ENCODE measurements at regions of chr5 and their contacts with region 1.

Region 1: DNA sequence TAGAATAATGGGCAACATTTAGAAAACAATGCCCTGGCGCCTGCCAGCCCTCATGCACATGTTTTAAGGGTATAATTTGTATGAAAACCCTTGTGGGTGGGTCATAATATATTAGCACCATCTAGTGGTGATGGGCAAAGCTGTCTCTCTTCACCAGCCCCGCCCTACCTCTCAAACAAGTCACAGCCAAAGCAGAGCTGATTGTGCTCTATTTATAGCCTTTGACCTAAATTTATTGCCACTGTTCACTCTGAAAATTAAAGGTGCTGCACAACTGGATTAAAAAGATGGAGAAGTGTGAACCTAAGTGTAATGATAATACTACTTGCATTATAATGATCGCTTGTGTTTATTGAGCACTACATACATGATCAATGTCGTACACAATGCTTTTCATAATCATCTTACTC is 131.9 kb upstream of the ANKH start:
- DNase-seq: peak; percentile 75 to 87 (median 86)
- H3K4me3 ChIP-seq: no peak overlapping the region
- H3K27ac ChIP-seq: no peak overlapping the region
- H3K4me1 ChIP-seq: peaks cover 0 to 10% (median 0%) of the 10 kb centered on the region in 4 experiments
- H3K27me3 ChIP-seq: peaks cover 0 to 3% (median 0%) of the 10 kb centered on the region in 5 experiments

Region 2: GRCh38 chr5:14685757-14686156 is 317.8 kb before region 1 on chr5:
- CTCF ChIA-PET with region 1: interaction called, 11 read pairs
- POLR2A ChIA-PET with region 1: no interaction called
- DNase-seq: peak; percentile 32 to 69 (median 61)
- H3K4me3 ChIP-seq: no peak overlapping the region
- H3K27ac ChIP-seq: no peak overlapping the region
- H3K4me1 ChIP-seq: peaks cover 0 to 2% (median 0%) of the 10 kb centered on the region in 4 experiments
- H3K27me3 ChIP-seq: no peaks in the 10 kb centered on the region

Region 3: GRCh38 chr5:14727428-14727865 is 276.1 kb before region 1 on chr5:
- CTCF ChIA-PET with region 1: interaction called, 16 read pairs
- POLR2A ChIA-PET with region 1: no interaction called
- DNase-seq: peak; percentile 63 to 81 (median 72)
- H3K4me3 ChIP-seq: no peak overlapping the region
- H3K27ac ChIP-seq: no peak overlapping the region
- H3K4me1 ChIP-seq: peaks cover 0 to 12% (median 8%) of the 10 kb centered on the region in 4 experiments
- H3K27me3 ChIP-seq: no peaks in the 10 kb centered on the region

Region 4: GRCh38 chr5:14946815-14947640 is 56.5 kb before region 1 on chr5:
- CTCF ChIA-PET with region 1: interaction called, 91 read pairs
- POLR2A ChIA-PET with region 1: no interaction called
- DNase-seq: peak; percentile 66 to 80 (median 73)
- H3K4me3 ChIP-seq: no peak overlapping the region
- H3K27ac ChIP-seq: no peak overlapping the region
- H3K4me1 ChIP-seq: peaks cover 0 to 4% (median 0%) of the 10 kb centered on the region in 4 experiments
- H3K27me3 ChIP-seq: peaks cover 0 to 2% (median 0%) of the 10 kb centered on the region in 5 experiments

Region 5: DNA sequence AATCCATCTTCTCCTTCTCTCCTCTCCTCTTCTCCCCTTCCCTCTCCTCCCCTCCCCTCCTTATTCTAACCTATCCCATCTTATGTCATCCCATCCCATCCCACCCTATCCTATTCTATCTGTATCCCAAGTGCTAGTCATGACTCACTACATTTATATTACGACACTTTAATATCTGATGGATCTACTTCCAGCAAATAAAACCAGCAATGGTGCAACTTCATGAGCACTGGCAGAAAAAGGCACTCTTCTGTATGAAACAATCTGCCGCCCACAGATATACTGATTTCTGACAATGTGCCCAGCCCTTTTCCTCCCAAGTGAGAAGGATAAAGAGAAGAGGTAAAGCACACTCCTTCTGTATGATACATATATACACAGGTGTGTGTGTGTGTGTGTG is 45.3 kb before region 1 on chr5:
- CTCF ChIA-PET with region 1: interaction called, 91 read pairs
- POLR2A ChIA-PET with region 1: no interaction called
- DNase-seq: no peak
- H3K4me3 ChIP-seq: no peak overlapping the region
- H3K27ac ChIP-seq: no peak overlapping the region
- H3K4me1 ChIP-seq: no peaks in the 10 kb centered on the region
- H3K27me3 ChIP-seq: no peaks in the 10 kb centered on the region

Region 6: GRCh38 chr5:14983666-14984441 is 19.7 kb before region 1 on chr5:
- CTCF ChIA-PET with region 1: interaction called, 16 read pairs
- POLR2A ChIA-PET with region 1: no interaction called
- DNase-seq: peak; percentile 34 to 82 (median 75)
- H3K4me3 ChIP-seq: peak overlapping the region in 3 of 7 experiments; percentile 31 to 53 (median 50)
- H3K27ac ChIP-seq: no peak overlapping the region
- H3K4me1 ChIP-seq: peaks cover 3 to 27% (median 22%) of the 10 kb centered on the region in 4 experiments
- H3K27me3 ChIP-seq: no peaks in the 10 kb centered on the region

Measured in common myeloid progenitor, CD34-positive (primary cell).